Gastrocnemius medialis (tissue), 4 donors: ENCODE measurements at regions of chrX and their contacts with region 1.

Region 1: GRCh38 chrX:75156021-75156945 is at the start of gene ABCB7:
- DNase-seq: peak; percentile 32 to 53
- ATAC-seq: peak; percentile 94 to 97
- H3K4me3 ChIP-seq: peak within 1 kb of the TSS; percentile 57 to 77 (median 72)
- H3K27ac ChIP-seq: peak within 1 kb of the TSS; percentile 78 to 90 (median 86)
- H3K4me1 ChIP-seq: peaks cover 7 to 16% of the 10 kb centered on the region in 2 donors
- H3K27me3 ChIP-seq: no peaks in the 10 kb centered on the region
- CTCF ChIP-seq: no peak
- POLR2A ChIP-seq: peak in 1 of 2 donors; percentile 10
- total RNA-seq, gene ABCB7: 47.1 to 91.2 (median 54.6) TPM

Region 2: DNA sequence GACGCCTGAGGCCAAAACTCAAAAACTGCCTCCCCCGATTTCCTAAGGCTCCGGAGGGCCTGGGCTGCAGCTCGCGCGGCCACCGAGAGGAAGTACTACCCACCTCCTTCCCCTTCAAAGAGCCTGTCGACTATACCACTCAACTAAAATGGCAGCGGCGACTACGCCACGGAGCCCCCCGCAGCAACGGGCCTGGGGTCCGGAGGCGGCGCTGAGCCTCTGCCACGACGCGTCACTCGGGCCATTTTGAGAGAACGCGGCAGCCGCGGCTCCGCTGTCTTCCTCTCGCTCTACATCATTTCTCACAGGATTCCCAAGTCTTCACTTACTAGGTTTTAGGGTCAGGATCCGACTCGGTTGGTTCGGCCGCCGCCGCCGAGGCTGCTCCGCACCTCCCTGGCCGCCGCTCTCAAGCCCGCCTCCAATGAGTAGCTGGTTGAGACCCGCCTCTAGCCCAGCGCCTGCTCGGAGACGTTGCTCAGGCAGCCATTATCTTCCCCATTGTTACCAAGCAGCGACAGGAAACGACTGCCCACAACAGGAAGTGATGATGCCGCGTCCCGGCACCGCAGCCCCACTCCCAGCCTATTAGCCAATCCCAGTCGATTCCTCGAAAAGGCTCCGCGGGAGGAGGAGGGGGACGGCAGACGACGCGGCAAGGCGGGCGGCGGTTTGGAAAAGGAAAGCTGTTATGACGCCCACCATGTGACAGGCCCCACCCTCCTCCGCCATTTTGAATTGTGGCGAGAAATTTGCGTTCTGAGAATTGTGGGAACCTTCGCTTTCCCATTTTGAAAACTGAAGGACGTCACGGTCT is 542.0 kb before region 1 on chrX and contains the start of gene RLIM:
- in situ Hi-C with region 1: no loop called
- intact Hi-C with region 1: loop called (anchors 10 kb)
- DNase-seq: peak; percentile 90 to 94
- ATAC-seq: peak; percentile 95 to 96
- H3K4me3 ChIP-seq: peak within 1 kb of the TSS; percentile 59 to 86 (median 70)
- H3K27ac ChIP-seq: peak within 1 kb of the TSS; percentile 90 to 95 (median 93)
- H3K4me1 ChIP-seq: no peaks in the 10 kb centered on the region
- H3K27me3 ChIP-seq: peaks cover 0 to 3% (median 0%) of the 10 kb centered on the region in 3 donors
- CTCF ChIP-seq: no peak
- POLR2A ChIP-seq: peak; percentile 79 to 83
- total RNA-seq, gene RLIM: 15.3 to 26.7 (median 21.5) TPM

Region 3: GRCh38 chrX:74890676-74891430 is 265.4 kb before region 1 on chrX:
- in situ Hi-C with region 1: no loop called
- intact Hi-C with region 1: no loop called
- DNase-seq: no peak
- ATAC-seq: no peak
- H3K4me3 ChIP-seq: no peak overlapping the region
- H3K27ac ChIP-seq: no peak overlapping the region
- H3K4me1 ChIP-seq: no peaks in the 10 kb centered on the region
- H3K27me3 ChIP-seq: peaks cover 0 to 6% (median 0%) of the 10 kb centered on the region in 3 donors
- CTCF ChIP-seq: no peak
- POLR2A ChIP-seq: no peak

Region 4: GRCh38 chrX:75107863-75108509 is 48.3 kb before region 1 on chrX:
- in situ Hi-C with region 1: no loop called
- intact Hi-C with region 1: no loop called
- DNase-seq: peak in 1 of 2 donors; percentile 20
- ATAC-seq: peak in 1 of 2 donors; percentile 11
- H3K4me3 ChIP-seq: no peak overlapping the region
- H3K27ac ChIP-seq: no peak overlapping the region
- H3K4me1 ChIP-seq: no peaks in the 10 kb centered on the region
- H3K27me3 ChIP-seq: no peaks in the 10 kb centered on the region
- CTCF ChIP-seq: no peak
- POLR2A ChIP-seq: no peak

Region 5: DNA sequence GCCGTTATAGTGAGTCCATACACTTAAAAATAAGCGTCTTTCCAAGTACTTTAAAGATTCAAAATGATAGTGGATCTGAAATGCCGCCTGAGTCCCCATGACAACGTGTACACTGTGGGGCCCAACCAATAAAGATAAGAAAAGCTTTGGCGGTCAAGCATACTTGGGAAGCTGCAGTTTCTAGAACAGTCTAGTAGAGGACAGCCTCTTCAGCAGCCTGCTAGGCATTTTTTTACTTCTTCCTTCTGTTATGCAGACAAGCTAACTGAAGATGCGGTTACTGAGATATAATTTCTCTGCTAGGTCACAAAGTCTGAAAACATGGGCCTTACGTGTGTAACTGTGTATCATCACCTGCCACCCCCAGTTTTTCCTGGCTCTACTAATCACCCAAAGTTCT is 117.2 kb after region 1 on chrX:
- in situ Hi-C with region 1: no loop called
- intact Hi-C with region 1: loop called (anchors 2 kb)
- DNase-seq: no peak
- ATAC-seq: peak; percentile 12 to 19
- H3K4me3 ChIP-seq: peak overlapping the region; percentile 58 to 83 (median 76)
- H3K27ac ChIP-seq: peak overlapping the region; percentile 89 to 97 (median 92)
- H3K4me1 ChIP-seq: peaks cover 11 to 22% of the 10 kb centered on the region in 2 donors
- H3K27me3 ChIP-seq: no peaks in the 10 kb centered on the region
- CTCF ChIP-seq: no peak
- POLR2A ChIP-seq: no peak

Region 6: GRCh38 chrX:76148753-76149152 is 992.5 kb after region 1 on chrX:
- in situ Hi-C with region 1: no loop called
- intact Hi-C with region 1: loop called (anchors 10 kb)
- DNase-seq: peak in 1 of 2 donors; percentile 33
- ATAC-seq: peak in 1 of 2 donors; percentile 6
- H3K4me3 ChIP-seq: peak overlapping the region; percentile 27 to 48 (median 43)
- H3K27ac ChIP-seq: peak overlapping the region; percentile 76 to 92 (median 82)
- H3K4me1 ChIP-seq: peaks cover 10 to 22% of the 10 kb centered on the region in 2 donors
- H3K27me3 ChIP-seq: peaks cover 0 to 3% (median 0%) of the 10 kb centered on the region in 3 donors
- CTCF ChIP-seq: no peak
- POLR2A ChIP-seq: no peak

Region 7: GRCh38 chrX:76427560-76428242 is 1271.4 kb after region 1 on chrX and contains the start of gene MAGEE1:
- in situ Hi-C with region 1: no loop called
- intact Hi-C with region 1: no loop called
- DNase-seq: peak; percentile 8 to 55
- ATAC-seq: peak; percentile 84 to 94
- H3K4me3 ChIP-seq: peak within 1 kb of the TSS; percentile 53 to 68 (median 62)
- H3K27ac ChIP-seq: peak within 1 kb of the TSS in 3 of 4 donors; percentile 26 to 57 (median 52)
- H3K4me1 ChIP-seq: no peaks in the 10 kb centered on the region
- H3K27me3 ChIP-seq: no peaks in the 10 kb centered on the region
- CTCF ChIP-seq: no peak
- POLR2A ChIP-seq: no peak
- total RNA-seq, gene MAGEE1: 0.29 to 0.65 (median 0.52) TPM